Prostate gland (tissue), 2 donors: ENCODE measurements at regions of chr2 and their contacts with region 1.

Region 1: GRCh38 chr2:127591221-127591923 is 54.6 kb upstream of the GPR17 start:
- DNase-seq: peak; percentile 44
- H3K4me3 ChIP-seq: no peak overlapping the region
- H3K27ac ChIP-seq: no peak overlapping the region
- H3K4me1 ChIP-seq: no peaks in the 10 kb centered on the region
- H3K27me3 ChIP-seq: no peaks in the 10 kb centered on the region
- CTCF ChIP-seq: peak; percentile 44 to 85 (median 79)
- POLR2A ChIP-seq: no peak

Region 2: DNA sequence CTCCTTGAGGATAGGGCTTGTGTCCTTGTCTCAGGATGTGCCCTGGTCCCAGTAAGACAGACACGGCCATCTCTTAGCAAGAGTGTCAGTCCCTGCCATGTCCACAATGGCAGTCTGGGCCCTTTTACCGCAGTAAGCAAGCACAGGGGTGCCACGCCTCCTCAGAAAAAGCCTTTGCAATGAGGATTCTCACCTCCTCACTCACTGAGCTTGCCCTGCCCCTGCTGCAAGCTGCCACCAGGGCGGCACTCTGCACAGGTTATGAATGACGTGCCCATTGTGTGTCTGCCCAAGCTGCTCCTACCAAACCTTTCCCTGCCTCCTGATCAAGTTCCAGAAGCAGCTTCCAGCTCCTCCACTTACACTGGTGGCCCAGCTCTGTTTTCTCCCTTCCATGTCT is 320.7 kb before region 1 on chr2:
- intact Hi-C with region 1: no loop called
- DNase-seq: no peak
- H3K4me3 ChIP-seq: no peak overlapping the region
- H3K27ac ChIP-seq: no peak overlapping the region
- H3K4me1 ChIP-seq: no peaks in the 10 kb centered on the region
- H3K27me3 ChIP-seq: no peaks in the 10 kb centered on the region
- CTCF ChIP-seq: no peak
- POLR2A ChIP-seq: no peak

Region 3: DNA sequence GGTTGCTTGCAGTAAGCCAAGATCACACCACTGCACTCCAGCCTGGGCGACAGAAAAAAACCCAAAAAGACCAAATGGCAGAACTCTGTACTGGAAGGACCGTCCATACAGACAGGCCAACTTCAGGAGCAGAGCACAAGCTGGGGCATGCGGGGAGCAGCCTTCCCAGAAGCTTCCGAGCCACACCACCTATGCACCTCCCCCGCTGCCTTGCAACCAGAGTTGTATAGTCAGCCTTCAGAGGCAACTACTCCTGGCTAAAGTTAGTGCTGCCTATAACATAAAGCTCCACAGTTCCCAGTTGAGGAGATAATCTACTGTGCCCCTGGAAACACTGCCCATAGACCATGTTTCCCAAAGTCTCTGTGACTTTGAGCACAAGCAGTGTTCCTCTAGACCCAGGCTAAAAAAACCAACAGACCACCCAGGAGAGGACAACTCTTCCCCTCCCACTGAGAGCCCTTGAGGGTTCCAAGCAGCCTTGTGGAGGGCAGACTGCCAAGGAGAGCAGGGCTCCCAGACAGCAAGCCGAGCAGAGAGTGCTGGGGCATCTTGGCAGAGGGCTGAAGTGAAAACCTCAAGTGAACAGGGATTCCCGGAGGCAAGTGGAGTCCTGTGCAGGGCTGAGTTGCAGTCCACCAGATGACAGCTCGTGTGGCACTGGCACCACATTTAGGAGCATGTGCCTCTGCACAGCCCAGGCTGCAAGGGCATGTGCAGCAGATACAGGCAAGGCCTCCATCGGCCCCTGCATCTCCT is 116.7 kb after region 1 on chr2:
- intact Hi-C with region 1: loop called (anchors 5 kb)
- DNase-seq: no peak
- H3K4me3 ChIP-seq: no peak overlapping the region
- H3K27ac ChIP-seq: no peak overlapping the region
- H3K4me1 ChIP-seq: peaks cover 4% of the 10 kb centered on the region
- H3K27me3 ChIP-seq: no peaks in the 10 kb centered on the region
- CTCF ChIP-seq: no peak
- POLR2A ChIP-seq: no peak